Colonic mucosa (tissue), 4 donors: ENCODE measurements at regions of chr14 and their contacts with region 1.

Region 1: DNA sequence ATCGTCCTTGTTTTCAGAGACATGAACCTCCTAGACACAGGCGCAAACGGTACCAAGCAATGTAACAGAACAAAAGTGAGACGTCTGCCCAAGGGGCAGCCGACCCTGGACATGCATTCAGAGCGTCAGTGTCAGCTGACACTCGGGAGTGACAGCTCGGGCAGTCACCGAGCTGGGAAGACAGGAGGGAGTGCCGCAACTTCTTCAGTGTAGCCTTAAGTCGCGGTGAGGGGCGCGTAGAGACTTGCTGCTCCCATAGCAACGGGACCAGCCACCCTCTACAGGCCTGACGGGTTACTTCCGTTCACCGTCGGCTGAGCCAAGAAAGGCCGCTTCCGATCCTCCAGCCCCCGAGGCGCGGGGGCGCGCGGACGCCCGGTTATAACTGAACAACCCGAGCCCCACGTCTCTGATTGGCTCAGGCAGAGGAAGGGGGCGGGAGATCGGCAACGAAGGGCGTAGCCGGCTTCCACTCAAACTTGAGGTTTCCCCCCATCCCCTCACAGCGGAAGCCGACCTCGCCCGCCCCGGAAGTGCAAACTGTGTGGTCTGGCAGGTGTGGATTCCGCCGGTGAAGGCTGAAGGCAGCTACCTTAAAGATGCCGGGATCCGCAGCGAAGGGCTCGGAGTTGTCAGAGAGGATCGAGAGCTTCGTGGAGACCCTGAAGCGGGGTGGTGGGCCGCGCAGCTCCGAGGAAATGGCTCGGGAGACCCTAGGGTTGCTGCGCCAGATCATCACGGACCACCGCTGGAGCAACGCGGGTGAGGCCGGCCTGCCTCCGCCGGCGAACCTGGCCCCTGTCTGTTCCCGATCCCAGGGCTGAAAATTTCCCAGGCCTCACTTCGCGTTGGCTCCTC is at the start of gene EIF2B2:
- DNase-seq: peak; percentile 99
- H3K4me3 ChIP-seq: peak within 1 kb of the TSS; percentile 95
- H3K27ac ChIP-seq: peak within 1 kb of the TSS; percentile 90
- H3K4me1 ChIP-seq: peaks cover 11% of the 10 kb centered on the region
- H3K27me3 ChIP-seq: no peaks in the 10 kb centered on the region
- CTCF ChIP-seq: no peak
- total RNA-seq, gene EIF2B2: 34.0 to 48.9 TPM

Region 2: GRCh38 chr14:74945823-74946682 is 56.6 kb before region 1 on chr14:
- intact Hi-C with region 1: no loop called
- DNase-seq: peak; percentile 87
- H3K4me3 ChIP-seq: no peak overlapping the region
- H3K27ac ChIP-seq: no peak overlapping the region
- H3K4me1 ChIP-seq: peaks cover under 1% of the 10 kb centered on the region
- H3K27me3 ChIP-seq: no peaks in the 10 kb centered on the region
- CTCF ChIP-seq: peak; percentile 88

Region 3: GRCh38 chr14:75069811-75070782 is 67.5 kb after region 1 on chr14:
- intact Hi-C with region 1: loop called (anchors 10 kb)
- DNase-seq: no peak
- H3K4me3 ChIP-seq: peak overlapping the region; percentile 58
- H3K27ac ChIP-seq: peak overlapping the region; percentile 95
- H3K4me1 ChIP-seq: peaks cover 3% of the 10 kb centered on the region
- H3K27me3 ChIP-seq: no peaks in the 10 kb centered on the region
- CTCF ChIP-seq: no peak